Activated CD4-positive, alpha-beta T cell treated with anti-CD3 and anti-CD28 coated beads for 36 hours (primary cell): ENCODE measurements at regions of chr12 and their contacts with region 1.

Region 1: DNA sequence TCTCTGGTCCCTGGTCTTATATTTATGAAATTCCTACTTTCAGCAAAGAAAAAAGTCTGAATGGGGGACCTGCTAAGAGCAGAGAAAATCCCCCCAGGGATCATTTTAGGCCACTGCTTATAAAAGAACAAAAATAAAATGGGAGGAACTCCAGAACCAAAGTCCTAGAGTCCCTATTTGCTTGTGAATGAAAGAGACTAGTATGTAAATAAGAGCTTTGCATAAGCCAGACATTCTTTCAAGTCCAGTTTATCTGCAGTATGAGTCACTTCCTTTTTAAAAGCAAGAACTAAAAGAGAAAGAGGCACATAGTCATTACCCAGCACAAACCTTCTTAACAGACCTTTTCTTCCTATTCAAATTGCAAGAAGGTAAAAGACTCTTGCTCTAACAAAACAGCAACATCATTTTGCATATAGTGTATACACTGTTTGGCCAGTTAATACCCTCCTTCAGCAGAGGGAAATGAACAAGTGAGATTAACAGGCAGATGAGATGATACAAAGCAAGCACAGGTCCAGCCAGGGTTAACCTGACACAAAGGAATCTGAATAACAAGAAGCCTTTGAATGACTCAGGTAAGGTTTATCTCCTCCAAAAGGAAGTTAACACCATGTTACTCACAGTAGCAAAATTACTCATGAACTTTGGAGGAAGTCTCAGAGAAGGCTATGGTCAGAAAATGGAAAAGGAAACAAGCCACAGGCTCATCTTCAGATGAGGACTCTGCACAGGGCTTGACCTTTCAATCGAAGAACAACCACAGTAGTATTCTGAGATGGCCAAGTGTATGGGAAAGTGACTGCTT is 87.3 kb downstream of the PHLDA1 start:
- DNase-seq: peak; percentile 42
- ATAC-seq: peak; percentile 92
- H3K4me3 Mint-ChIP-seq: peak overlapping the region; percentile 37
- H3K27ac Mint-ChIP-seq: peak overlapping the region; percentile 90
- H3K4me1 Mint-ChIP-seq: peaks cover 31% of the 10 kb centered on the region
- H3K27me3 Mint-ChIP-seq: no peaks in the 10 kb centered on the region

Region 2: DNA sequence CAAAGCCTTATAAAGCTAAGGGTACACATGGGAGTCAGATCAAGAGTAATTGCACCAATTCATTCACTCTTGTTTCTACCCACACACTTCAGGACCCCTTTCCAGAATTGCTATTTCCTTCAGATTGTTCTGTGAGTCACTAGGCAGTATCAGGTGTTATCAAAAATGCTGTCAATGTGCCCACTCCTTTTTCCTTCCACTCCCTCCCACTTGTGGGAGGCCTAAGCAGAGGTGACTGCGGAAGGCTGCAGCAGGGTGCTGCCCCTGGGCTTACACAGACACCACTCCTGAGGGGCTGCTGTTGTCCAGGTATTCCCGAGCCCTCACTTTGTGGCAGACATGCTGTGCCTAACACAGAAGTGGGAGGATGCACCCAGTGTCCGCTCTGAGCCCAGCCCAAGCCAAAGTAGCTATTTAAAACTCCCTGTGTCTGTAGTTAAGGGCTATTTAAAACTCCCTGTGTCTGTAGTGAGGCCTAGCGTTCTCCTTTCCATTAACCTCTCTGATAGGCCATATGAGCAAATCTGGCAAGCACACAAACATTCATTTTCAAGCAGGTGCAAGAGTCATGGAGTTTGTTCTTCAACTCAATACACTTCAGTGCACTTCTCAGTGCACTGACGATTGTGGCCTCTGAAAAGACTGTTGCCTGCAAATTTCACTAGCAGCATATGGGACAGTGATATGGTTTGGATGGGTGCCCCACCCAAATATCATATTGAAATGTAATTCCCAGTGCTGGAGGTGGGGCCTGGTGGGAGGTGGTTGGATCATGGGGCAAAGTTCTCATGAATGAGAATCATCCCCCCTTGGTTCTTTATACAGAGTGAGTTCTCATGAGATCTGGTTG is 30.6 kb before region 1 on chr12:
- CTCF ChIA-PET with region 1: no interaction called
- POLR2A ChIA-PET with region 1: no interaction called
- intact Hi-C with region 1: loop called in 1 of 2 experiments (anchors 1 kb)
- DNase-seq: peak; percentile 74
- ATAC-seq: peak; percentile 94
- H3K4me3 Mint-ChIP-seq: no peak overlapping the region
- H3K27ac Mint-ChIP-seq: no peak overlapping the region
- H3K4me1 Mint-ChIP-seq: peaks cover 21% of the 10 kb centered on the region
- H3K27me3 Mint-ChIP-seq: peaks cover 1% of the 10 kb centered on the region

Region 3: GRCh38 chr12:75977952-75978671 is 33.8 kb after region 1 on chr12:
- CTCF ChIA-PET with region 1: interaction called, 5 read pairs
- POLR2A ChIA-PET with region 1: interaction called, 3 read pairs
- intact Hi-C with region 1: loop called (anchors 1 kb)
- DNase-seq: peak; percentile 85
- ATAC-seq: peak; percentile 80
- H3K4me3 Mint-ChIP-seq: peak overlapping the region; percentile 59
- H3K27ac Mint-ChIP-seq: peak overlapping the region; percentile 100
- H3K4me1 Mint-ChIP-seq: peaks cover 69% of the 10 kb centered on the region
- H3K27me3 Mint-ChIP-seq: no peaks in the 10 kb centered on the region

Region 4: GRCh38 chr12:75994186-75994731 is 50.0 kb after region 1 on chr12:
- CTCF ChIA-PET with region 1: no interaction called
- POLR2A ChIA-PET with region 1: no interaction called
- intact Hi-C with region 1: loop called (anchors 1 kb)
- DNase-seq: peak; percentile 53
- ATAC-seq: peak; percentile 86
- H3K4me3 Mint-ChIP-seq: no peak overlapping the region
- H3K27ac Mint-ChIP-seq: peak overlapping the region; percentile 34
- H3K4me1 Mint-ChIP-seq: peaks cover 26% of the 10 kb centered on the region
- H3K27me3 Mint-ChIP-seq: peaks cover 7% of the 10 kb centered on the region

Region 5: GRCh38 chr12:76020731-76021672 is 76.7 kb after region 1 on chr12:
- CTCF ChIA-PET with region 1: interaction called, 3 read pairs
- POLR2A ChIA-PET with region 1: interaction called, 8 read pairs
- intact Hi-C with region 1: loop called (anchors 1 kb)
- DNase-seq: peak; percentile 88
- ATAC-seq: peak; percentile 79
- H3K4me3 Mint-ChIP-seq: peak overlapping the region; percentile 54
- H3K27ac Mint-ChIP-seq: peak overlapping the region; percentile 99
- H3K4me1 Mint-ChIP-seq: peaks cover 56% of the 10 kb centered on the region
- H3K27me3 Mint-ChIP-seq: peaks cover 1% of the 10 kb centered on the region

Region 6: GRCh38 chr12:76158518-76159321 is 214.4 kb after region 1 on chr12:
- CTCF ChIA-PET with region 1: no interaction called
- POLR2A ChIA-PET with region 1: no interaction called
- intact Hi-C with region 1: loop called in 1 of 2 experiments (anchors 1 kb)
- DNase-seq: peak; percentile 85
- ATAC-seq: peak; percentile 97
- H3K4me3 Mint-ChIP-seq: peak overlapping the region; percentile 18
- H3K27ac Mint-ChIP-seq: peak overlapping the region; percentile 26
- H3K4me1 Mint-ChIP-seq: peaks cover 15% of the 10 kb centered on the region
- H3K27me3 Mint-ChIP-seq: peaks cover 2% of the 10 kb centered on the region

Region 7: GRCh38 chr12:76277480-76277879 is 333.2 kb after region 1 on chr12:
- CTCF ChIA-PET with region 1: no interaction called
- POLR2A ChIA-PET with region 1: no interaction called
- intact Hi-C with region 1: loop called in 1 of 2 experiments (anchors 1 kb)
- DNase-seq: no peak
- ATAC-seq: no peak
- H3K4me3 Mint-ChIP-seq: no peak overlapping the region
- H3K27ac Mint-ChIP-seq: no peak overlapping the region
- H3K4me1 Mint-ChIP-seq: peaks cover 14% of the 10 kb centered on the region
- H3K27me3 Mint-ChIP-seq: peaks cover 33% of the 10 kb centered on the region